T-cell (primary cell): ENCODE measurements at regions of chr10 and their contacts with region 1.

Region 1: GRCh38 chr10:70169649-70170364 is 507 bp downstream of the SAR1A start:
- DNase-seq: peak in 7 of 35 experiments; percentile 6 to 32 (median 17)
- ATAC-seq: peak; percentile 21 to 28 (median 24)
- H3K4me3 ChIP-seq: peak overlapping the region; percentile 77 to 96
- H3K4me3 Mint-ChIP-seq: peak overlapping the region; percentile 89 to 93 (median 92)
- H3K27ac ChIP-seq: peak overlapping the region; percentile 75
- H3K27ac Mint-ChIP-seq: peak overlapping the region; percentile 77 to 87
- H3K4me1 ChIP-seq: peaks cover 34 to 59% of the 10 kb centered on the region in 2 experiments
- H3K4me1 Mint-ChIP-seq: peaks cover 58 to 65% (median 64%) of the 10 kb centered on the region in 3 donors
- H3K27me3 ChIP-seq: no peaks in the 10 kb centered on the region
- H3K27me3 Mint-ChIP-seq: no peaks in the 10 kb centered on the region

Region 2: DNA sequence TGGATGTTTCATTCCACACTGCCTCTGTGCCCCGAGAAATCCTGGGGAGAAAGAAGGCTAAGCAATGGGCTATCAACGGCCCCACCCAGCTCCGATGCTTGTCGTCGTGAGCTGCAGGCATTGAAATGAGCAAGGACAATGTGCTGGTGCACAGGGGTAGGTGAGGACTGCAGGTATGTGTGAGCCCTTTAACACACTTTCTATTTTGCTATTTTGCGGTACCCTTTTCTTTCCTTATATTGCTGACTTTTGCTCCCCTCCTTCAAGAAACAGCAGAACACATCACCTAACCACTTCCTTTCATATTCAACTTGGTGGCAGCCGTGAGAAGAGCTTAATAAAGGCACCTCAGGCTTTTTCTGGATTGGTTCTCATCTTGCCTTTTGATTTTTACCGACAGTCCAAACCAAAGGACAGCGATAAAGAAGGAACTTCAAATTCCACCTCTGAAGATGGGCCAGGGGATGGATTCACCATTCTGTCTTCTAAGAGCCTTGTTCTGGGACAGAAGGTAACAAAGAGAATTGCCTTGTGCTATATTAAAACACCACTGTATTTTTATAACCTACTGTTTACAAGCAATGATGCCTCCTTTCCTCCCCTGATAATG is 76.4 kb before region 1 on chr10:
- CTCF ChIA-PET with region 1: no interaction called
- POLR2A ChIA-PET with region 1: interaction called in 1 of 2 experiments, 18 read pairs
- DNase-seq: peak in 17 of 35 experiments; percentile 1 to 61 (median 12)
- ATAC-seq: peak; percentile 72 to 79 (median 74)
- H3K4me3 ChIP-seq: peak overlapping the region; percentile 42 to 54
- H3K4me3 Mint-ChIP-seq: peak overlapping the region; percentile 86 to 90 (median 90)
- H3K27ac ChIP-seq: peak overlapping the region; percentile 88
- H3K27ac Mint-ChIP-seq: peak overlapping the region; percentile 96 to 98
- H3K4me1 ChIP-seq: peaks cover 17 to 34% of the 10 kb centered on the region in 2 experiments
- H3K4me1 Mint-ChIP-seq: peaks cover 44 to 59% (median 58%) of the 10 kb centered on the region in 3 donors
- H3K27me3 ChIP-seq: no peaks in the 10 kb centered on the region
- H3K27me3 Mint-ChIP-seq: no peaks in the 10 kb centered on the region

Region 3: DNA sequence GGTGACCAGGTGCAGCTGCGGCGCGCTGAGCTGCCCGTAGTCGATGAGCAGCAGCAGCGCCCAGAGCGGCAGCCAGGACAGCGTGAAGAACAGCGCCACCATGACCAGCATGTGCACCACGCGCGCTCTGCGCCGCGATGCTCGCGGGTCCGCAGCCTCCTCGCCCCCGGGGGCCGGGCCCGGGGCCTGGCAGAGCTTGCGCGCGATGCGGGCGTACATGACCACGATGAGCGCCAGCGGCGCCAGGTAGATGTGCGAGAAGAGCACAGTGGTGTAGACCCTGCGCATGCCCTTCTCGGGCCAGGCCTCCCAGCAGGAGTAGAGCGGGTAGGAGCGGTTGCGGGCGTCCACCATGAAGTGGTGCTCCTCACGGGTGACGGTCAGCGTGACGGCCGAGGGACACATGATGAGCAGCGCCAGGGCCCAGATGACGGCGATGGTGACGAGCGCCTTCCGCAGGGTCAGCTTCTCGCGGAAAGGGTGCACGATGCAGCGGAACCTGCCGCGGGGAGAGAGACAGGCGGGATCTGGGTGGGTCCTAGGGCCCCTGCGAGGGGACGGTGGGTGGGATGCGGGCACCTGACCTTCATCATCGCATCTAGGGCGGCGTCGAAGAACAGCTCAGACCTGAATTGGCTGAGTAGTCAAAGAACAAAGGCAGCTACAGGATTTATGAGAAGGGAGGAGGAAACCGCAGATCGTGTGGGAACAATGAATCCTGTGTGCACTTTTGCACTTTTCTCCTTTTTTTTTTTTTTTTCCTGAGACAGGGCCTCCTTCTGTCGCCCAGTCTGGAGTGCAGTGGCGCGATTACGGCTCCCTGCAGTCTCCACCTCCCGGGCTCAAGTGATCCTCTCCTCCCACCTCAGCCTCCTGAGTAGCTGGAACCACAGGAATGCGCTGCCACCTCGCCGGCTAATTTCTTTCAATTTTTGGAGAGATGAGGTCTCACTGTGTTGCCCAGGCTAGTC is 85.8 kb after region 1 on chr10:
- CTCF ChIA-PET with region 1: no interaction called
- POLR2A ChIA-PET with region 1: no interaction called
- DNase-seq: peak in 8 of 35 experiments; percentile 5 to 41 (median 15)
- ATAC-seq: peak; percentile 63 to 81 (median 69)
- H3K4me3 ChIP-seq: peak overlapping the region; percentile 19 to 60
- H3K4me3 Mint-ChIP-seq: peak overlapping the region; percentile 62 to 70 (median 69)
- H3K27ac ChIP-seq: no peak overlapping the region
- H3K27ac Mint-ChIP-seq: no peak overlapping the region
- H3K4me1 ChIP-seq: peaks cover 0 to 11% of the 10 kb centered on the region in 2 experiments
- H3K4me1 Mint-ChIP-seq: peaks cover 0 to 11% (median 8%) of the 10 kb centered on the region in 3 donors
- H3K27me3 ChIP-seq: peaks cover 9 to 60% of the 10 kb centered on the region in 2 experiments
- H3K27me3 Mint-ChIP-seq: peaks cover 33 to 58% of the 10 kb centered on the region in 2 donors